ENCODE measurements at regions of chr4 and their contacts with region 1.

Region 1: DNA sequence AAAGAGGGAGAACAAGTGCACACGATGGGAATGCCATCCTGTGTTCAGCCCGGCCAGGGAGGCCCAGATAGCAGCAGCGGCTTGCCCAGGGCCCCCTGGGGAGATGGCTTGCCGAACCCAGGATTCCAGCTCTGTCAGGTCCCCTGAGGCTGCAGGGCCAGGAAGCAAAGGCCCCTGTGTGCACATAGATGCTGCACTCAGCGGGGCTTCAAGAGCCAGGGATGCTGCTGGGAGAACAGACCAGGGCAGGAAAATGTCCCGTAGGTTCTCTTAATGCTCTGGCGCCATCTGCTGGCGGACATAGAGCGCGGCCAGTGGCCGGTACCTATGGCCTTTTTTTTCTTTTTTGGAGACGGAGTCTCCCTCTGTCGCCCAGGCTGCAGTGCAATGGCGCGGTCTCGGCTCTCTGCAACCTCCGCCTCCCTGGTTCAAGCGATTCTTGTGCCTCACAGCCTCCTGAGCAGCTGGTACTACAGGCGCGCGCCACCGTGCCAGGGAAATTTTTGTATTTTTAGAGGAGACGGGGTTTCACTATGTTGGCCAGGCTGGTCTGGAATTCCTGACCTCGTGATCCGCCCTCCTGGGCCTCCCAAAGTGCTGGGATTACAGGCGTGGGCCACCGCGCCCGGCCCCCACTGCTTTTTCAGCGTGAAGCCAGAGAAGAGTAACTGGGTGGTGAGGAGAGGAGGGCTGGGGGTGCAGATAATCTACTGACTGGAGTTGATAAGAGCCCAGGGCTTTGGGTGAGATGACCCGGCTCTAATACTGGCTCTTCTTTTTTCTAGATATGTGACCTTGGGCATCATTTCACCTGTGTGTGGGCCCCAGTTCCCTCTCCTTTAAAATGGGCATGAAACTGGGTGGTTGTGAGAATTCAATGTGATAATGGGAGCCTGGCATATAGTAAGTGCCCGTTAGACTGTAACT is 22.5 kb downstream of the MED28 start:
- DNase-seq: peak; percentile 49 to 71
- ATAC-seq: peak; percentile 76 to 82
- H3K4me3 ChIP-seq: no peak overlapping the region
- H3K27ac ChIP-seq: peak overlapping the region in 2 of 4 donors; percentile 28 to 43
- H3K4me1 ChIP-seq: peaks cover 0 to 5% of the 10 kb centered on the region in 2 donors
- H3K27me3 ChIP-seq: no peaks in the 10 kb centered on the region
- CTCF ChIP-seq: peak; percentile 84 to 96 (median 92)
- POLR2A ChIP-seq: peak in 1 of 2 donors; percentile 12

Region 2: DNA sequence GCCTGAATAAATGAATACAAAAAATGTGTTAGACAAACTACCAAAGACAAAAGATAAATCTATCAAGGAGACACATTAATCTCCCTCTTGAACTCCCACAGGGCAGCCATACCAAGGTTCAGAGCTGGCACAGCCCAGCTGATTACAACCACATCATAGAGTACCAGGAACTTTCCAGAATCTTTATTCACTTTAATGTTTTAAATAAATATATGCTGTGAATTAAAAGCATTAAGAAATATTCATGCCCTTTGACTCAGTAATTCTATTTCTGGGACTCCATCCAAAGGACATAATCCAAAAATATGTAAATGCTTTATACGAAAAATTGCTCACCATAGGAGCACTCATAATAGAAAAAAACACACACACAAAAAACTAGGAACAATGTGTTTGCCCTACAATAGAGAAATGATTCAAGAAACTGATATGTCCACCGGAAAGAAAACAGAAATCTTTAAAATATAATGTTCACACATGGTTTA is 864.6 kb before region 1 on chr4:
- in situ Hi-C with region 1: no loop called
- intact Hi-C with region 1: no loop called
- DNase-seq: no peak
- ATAC-seq: no peak
- H3K4me3 ChIP-seq: no peak overlapping the region
- H3K27ac ChIP-seq: no peak overlapping the region
- H3K4me1 ChIP-seq: no peaks in the 10 kb centered on the region
- H3K27me3 ChIP-seq: no peaks in the 10 kb centered on the region
- CTCF ChIP-seq: no peak
- POLR2A ChIP-seq: no peak

Region 3: GRCh38 chr4:17142232-17142711 is 494.7 kb before region 1 on chr4:
- in situ Hi-C with region 1: no loop called
- intact Hi-C with region 1: no loop called
- DNase-seq: no peak
- ATAC-seq: no peak
- H3K4me3 ChIP-seq: no peak overlapping the region
- H3K27ac ChIP-seq: no peak overlapping the region
- H3K4me1 ChIP-seq: no peaks in the 10 kb centered on the region
- H3K27me3 ChIP-seq: no peaks in the 10 kb centered on the region
- CTCF ChIP-seq: no peak
- POLR2A ChIP-seq: no peak

Region 4: GRCh38 chr4:17529452-17529964 is 107.5 kb before region 1 on chr4:
- in situ Hi-C with region 1: no loop called
- intact Hi-C with region 1: no loop called
- DNase-seq: no peak
- ATAC-seq: no peak
- H3K4me3 ChIP-seq: no peak overlapping the region
- H3K27ac ChIP-seq: no peak overlapping the region
- H3K4me1 ChIP-seq: no peaks in the 10 kb centered on the region
- H3K27me3 ChIP-seq: no peaks in the 10 kb centered on the region
- CTCF ChIP-seq: no peak
- POLR2A ChIP-seq: no peak

Region 5: GRCh38 chr4:17544205-17544604 is 92.8 kb before region 1 on chr4:
- in situ Hi-C with region 1: loop called in 3 of 4 experiments (anchors 5 to 10 kb)
- intact Hi-C with region 1: loop called (anchors 1 kb)
- DNase-seq: no peak
- ATAC-seq: no peak
- H3K4me3 ChIP-seq: no peak overlapping the region
- H3K27ac ChIP-seq: no peak overlapping the region
- H3K4me1 ChIP-seq: no peaks in the 10 kb centered on the region
- H3K27me3 ChIP-seq: no peaks in the 10 kb centered on the region
- CTCF ChIP-seq: no peak
- POLR2A ChIP-seq: no peak

Region 6: GRCh38 chr4:17552427-17552826 is 84.5 kb before region 1 on chr4:
- in situ Hi-C with region 1: loop called (anchors 5 to 10 kb)
- intact Hi-C with region 1: loop called (anchors 1 kb)
- DNase-seq: no peak
- ATAC-seq: no peak
- H3K4me3 ChIP-seq: no peak overlapping the region
- H3K27ac ChIP-seq: no peak overlapping the region
- H3K4me1 ChIP-seq: no peaks in the 10 kb centered on the region
- H3K27me3 ChIP-seq: no peaks in the 10 kb centered on the region
- CTCF ChIP-seq: no peak
- POLR2A ChIP-seq: no peak

Region 7: DNA sequence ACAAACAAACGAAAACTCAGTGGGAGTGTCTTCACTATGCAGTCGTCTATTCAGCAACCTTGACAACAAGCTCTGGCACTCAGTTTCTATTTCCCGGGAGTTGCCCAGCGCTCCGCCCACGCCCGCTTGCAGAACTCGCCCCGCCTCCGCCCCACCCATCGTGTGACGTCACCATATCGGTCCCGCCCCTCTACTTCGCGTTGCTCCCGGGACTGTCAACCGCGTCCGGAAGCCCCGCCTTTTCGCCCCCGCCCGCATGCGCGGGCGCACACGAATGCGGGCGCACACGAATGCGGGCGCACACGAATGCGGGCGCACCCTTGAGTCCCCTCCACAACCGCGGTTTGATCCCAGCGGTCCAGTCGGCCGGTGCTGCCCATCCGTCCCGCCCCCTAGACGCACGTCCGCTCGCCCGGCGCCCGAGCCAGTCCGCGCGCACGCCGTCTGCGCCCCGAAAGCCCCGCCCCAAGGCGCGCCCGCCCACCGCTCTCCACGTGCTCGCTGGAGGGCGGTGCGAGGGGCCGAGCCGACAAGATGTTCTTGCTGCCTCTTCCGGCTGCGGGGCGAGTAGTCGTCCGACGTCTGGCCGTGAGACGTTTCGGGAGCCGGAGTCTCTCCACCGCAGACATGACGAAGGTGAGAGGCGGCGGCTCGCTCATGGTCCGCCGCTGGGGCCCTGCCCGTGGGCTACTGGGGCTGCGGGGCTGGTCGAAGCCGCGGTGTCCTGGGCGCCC is 59.9 kb before region 1 on chr4 and contains the start of gene LAP3:
- in situ Hi-C with region 1: no loop called
- intact Hi-C with region 1: loop called (anchors 2 kb)
- DNase-seq: peak; percentile 94 to 97
- ATAC-seq: peak; percentile 90 to 93
- H3K4me3 ChIP-seq: peak within 1 kb of the TSS; percentile 81 to 93 (median 87)
- H3K27ac ChIP-seq: peak within 1 kb of the TSS; percentile 86 to 95 (median 90)
- H3K4me1 ChIP-seq: peaks cover 16 to 28% of the 10 kb centered on the region in 2 donors
- H3K27me3 ChIP-seq: no peaks in the 10 kb centered on the region
- CTCF ChIP-seq: no peak
- POLR2A ChIP-seq: peak; percentile 80 to 90
- total RNA-seq, gene LAP3: 63.7 to 85.2 (median 76.5) TPM

Region 8: GRCh38 chr4:17597517-17597916 is 39.4 kb before region 1 on chr4:
- in situ Hi-C with region 1: no loop called
- intact Hi-C with region 1: loop called (anchors 2 kb)
- DNase-seq: no peak
- ATAC-seq: no peak
- H3K4me3 ChIP-seq: no peak overlapping the region
- H3K27ac ChIP-seq: no peak overlapping the region
- H3K4me1 ChIP-seq: peaks cover 0 to 6% of the 10 kb centered on the region in 2 donors
- H3K27me3 ChIP-seq: no peaks in the 10 kb centered on the region
- CTCF ChIP-seq: no peak
- POLR2A ChIP-seq: no peak

Region 9: GRCh38 chr4:17614416-17615299 is 22.3 kb before region 1 on chr4 and contains the start of gene MED28:
- in situ Hi-C with region 1: no loop called
- intact Hi-C with region 1: loop called (anchors 2 kb)
- DNase-seq: peak; percentile 94 to 95
- ATAC-seq: peak; percentile 88 to 90
- H3K4me3 ChIP-seq: peak within 1 kb of the TSS; percentile 70 to 98 (median 92)
- H3K27ac ChIP-seq: peak within 1 kb of the TSS; percentile 91 to 98 (median 97)
- H3K4me1 ChIP-seq: peaks cover 45% of the 10 kb centered on the region in 2 donors
- H3K27me3 ChIP-seq: no peaks in the 10 kb centered on the region
- CTCF ChIP-seq: peak in 3 of 5 experiments; percentile 23 to 51 (median 24)
- POLR2A ChIP-seq: peak; percentile 96 to 97
- total RNA-seq, gene MED28: 4.5 to 20.0 (median 17.5) TPM

Measured in gastrocnemius medialis (tissue), 4 donors.